PC-9 (cell line): ENCODE measurements at regions of chr19 and their contacts with region 1.

Region 1: DNA sequence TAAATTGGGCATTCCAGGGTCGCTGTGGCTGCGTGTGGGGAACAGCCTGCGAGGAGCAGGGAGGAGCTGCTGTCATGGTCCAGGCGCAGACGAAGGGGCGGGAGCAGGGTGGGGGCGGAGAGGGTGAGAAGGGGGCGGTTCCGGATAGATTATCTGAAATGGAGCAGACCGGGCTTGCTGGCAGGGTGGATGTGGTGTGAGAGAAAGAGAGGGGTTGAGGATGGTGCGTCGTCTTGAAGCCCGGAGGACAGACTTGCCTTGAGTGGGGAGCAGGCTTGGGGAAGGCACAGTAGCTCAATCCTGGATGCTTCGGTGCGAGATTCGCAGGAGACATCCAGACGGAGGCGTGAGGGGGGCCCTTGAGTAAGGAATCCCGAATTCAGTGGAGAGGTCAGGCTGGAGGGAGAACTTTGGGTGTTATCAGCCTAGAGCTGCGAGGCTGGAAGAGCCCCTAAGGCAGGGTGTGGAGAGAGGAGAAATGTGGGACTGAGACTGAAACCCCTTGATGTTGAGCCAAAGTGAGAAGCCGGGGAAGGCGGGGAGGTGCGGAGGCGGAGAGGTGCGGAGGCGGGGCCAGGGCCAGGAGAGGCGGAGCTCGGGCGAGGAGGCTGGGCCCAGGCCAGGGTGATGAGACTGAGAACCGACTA is 40.6 kb downstream of the DPF1 start:
- DNase-seq: no peak
- H3K4me3 ChIP-seq: no peak overlapping the region
- H3K27ac ChIP-seq: no peak overlapping the region
- H3K4me1 ChIP-seq: no peaks in the 10 kb centered on the region
- H3K27me3 ChIP-seq: no peaks in the 10 kb centered on the region
- CTCF ChIP-seq: no peak

Region 2: DNA sequence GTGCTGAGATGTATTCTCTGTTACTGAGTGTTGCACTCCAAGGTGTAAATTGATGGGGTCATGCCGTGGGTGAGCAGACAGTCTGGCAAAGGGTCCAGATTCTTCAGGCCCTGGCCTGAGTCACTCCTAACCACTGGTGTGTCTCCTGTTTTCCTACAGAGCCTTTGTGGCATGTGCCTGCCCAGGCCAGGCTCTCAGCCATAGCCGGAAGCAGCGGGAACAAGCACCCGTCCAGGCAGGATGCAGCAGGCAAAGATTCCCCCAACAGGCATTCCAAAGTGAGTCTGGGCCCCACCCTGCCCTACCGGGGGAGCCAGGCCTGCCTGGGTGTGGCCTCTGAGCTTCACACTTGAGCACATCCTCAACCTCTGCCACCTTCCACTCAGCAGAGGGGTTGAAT is 21.3 kb before region 1 on chr19:
- CTCF ChIA-PET with region 1: no interaction called
- POLR2A ChIA-PET with region 1: no interaction called
- intact Hi-C with region 1: no loop called
- DNase-seq: no peak
- H3K4me3 ChIP-seq: no peak overlapping the region
- H3K27ac ChIP-seq: no peak overlapping the region
- H3K4me1 ChIP-seq: no peaks in the 10 kb centered on the region
- H3K27me3 ChIP-seq: no peaks in the 10 kb centered on the region
- CTCF ChIP-seq: no peak

Region 3: DNA sequence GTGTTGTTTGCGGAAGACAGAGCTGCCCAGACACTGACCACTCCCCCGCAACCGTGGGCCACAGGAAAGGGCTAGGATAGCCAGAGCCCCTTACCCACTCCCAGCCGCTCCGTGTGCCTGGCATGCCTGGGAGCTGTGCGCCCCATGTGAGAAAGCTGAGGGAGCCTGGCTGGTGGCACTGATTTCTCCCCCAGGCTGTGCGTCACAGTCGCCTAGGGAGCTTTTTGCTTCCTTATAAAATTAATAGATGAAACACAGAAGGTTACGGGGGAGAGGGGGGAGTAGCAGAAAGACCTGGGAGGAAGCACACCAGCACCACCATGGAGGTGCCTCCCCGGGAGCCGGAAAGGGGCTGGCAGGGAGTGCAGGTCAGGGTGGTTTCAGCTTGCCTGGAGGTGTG is 16.0 kb after region 1 on chr19:
- CTCF ChIA-PET with region 1: interaction called, 11 read pairs
- POLR2A ChIA-PET with region 1: no interaction called
- intact Hi-C with region 1: no loop called
- DNase-seq: no peak
- H3K4me3 ChIP-seq: no peak overlapping the region
- H3K27ac ChIP-seq: no peak overlapping the region
- H3K4me1 ChIP-seq: no peaks in the 10 kb centered on the region
- H3K27me3 ChIP-seq: no peaks in the 10 kb centered on the region
- CTCF ChIP-seq: no peak

Region 4: DNA sequence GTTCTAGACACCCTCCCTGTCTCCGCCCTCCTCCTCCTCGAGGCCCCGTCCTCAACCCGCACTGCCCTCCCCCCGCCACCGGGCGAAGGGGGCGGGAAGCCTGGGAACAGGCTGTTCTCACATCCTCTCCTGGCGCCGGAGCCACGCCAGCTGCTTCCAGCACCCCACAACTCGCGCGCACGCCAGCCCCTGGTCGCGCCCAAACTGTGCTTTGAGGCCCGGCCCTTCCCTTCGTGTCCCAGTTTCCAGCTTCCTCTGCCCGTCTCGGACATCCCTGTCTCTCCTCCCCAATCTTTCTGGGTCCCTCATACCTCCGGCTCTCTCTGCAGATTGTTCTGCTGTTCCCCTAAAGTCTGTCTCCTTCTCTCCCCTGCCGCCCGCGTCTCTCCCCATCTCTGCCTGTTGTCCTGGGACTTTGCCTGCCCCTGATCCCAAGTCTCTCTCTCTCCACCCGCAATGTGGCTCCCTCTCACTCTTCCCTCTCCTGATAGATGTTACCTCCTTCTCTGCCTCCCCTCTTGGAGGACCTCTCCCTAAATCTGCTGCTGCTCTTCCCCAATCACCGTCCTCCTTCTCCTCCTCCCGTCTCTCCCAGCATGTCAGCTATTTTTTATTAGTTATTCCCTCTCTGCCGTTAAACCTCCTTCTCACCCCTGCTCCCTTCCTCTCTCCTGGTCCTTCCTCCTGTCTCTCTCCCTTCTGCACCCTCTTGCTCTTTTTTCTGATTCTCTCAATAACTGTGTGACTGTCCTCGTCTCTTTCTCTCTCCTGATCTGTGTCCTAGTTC is 26.5 kb after region 1 on chr19:
- CTCF ChIA-PET with region 1: no interaction called
- POLR2A ChIA-PET with region 1: no interaction called
- intact Hi-C with region 1: no loop called
- DNase-seq: no peak
- H3K4me3 ChIP-seq: no peak overlapping the region
- H3K27ac ChIP-seq: no peak overlapping the region
- H3K4me1 ChIP-seq: no peaks in the 10 kb centered on the region
- H3K27me3 ChIP-seq: no peaks in the 10 kb centered on the region
- CTCF ChIP-seq: no peak

Region 5: DNA sequence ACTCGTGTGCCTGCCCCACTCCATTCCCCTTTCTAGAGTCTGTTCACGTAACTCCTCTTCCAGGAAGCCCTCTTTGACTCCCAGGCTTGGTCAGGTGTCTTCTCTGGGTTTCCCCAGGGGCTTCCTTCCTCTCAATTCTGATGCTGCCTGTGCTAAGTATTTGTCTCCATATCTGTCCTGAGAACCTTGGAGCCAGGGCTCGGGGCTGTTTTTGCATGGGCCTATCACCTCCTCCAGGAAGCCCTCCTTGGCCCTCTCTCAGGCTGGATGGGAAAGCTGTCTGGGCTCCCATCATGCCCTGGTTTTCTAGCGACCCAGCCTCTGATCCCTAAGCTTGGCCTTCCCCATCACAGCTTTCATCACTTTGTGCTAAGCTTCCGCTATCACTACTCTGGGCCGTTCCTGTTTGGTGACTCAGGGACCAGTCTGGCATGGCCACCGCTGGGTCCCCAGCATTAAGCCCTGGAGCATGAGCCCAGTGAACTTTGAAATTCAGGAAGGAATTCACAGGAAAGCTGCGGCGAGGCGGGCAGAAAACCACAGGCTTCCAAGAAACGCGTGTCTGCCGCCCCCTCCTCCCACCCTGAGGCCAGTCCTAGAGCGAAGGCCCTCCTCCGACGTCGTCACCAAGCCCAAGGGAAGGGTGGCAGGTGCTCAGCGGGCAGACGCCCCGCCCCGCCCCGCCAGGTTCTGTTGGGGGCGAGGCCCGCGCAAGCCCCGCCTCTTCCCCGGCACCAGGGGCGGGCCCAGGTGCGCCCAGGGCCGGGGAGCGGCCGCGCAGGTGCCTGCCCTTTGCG is 80.5 kb after region 1 on chr19:
- CTCF ChIA-PET with region 1: no interaction called
- POLR2A ChIA-PET with region 1: no interaction called
- intact Hi-C with region 1: no loop called
- DNase-seq: peak; percentile 97 to 99
- H3K4me3 ChIP-seq: peak overlapping the region; percentile 34; the same call in 1 of the 2 replicates
- H3K27ac ChIP-seq: peak overlapping the region; percentile 94
- H3K4me1 ChIP-seq: peaks cover 35% of the 10 kb centered on the region
- H3K27me3 ChIP-seq: no peaks in the 10 kb centered on the region
- CTCF ChIP-seq: no peak